Gastrocnemius medialis (tissue), 4 donors: ENCODE measurements at regions of chr5 and their contacts with region 1.

Region 1: DNA sequence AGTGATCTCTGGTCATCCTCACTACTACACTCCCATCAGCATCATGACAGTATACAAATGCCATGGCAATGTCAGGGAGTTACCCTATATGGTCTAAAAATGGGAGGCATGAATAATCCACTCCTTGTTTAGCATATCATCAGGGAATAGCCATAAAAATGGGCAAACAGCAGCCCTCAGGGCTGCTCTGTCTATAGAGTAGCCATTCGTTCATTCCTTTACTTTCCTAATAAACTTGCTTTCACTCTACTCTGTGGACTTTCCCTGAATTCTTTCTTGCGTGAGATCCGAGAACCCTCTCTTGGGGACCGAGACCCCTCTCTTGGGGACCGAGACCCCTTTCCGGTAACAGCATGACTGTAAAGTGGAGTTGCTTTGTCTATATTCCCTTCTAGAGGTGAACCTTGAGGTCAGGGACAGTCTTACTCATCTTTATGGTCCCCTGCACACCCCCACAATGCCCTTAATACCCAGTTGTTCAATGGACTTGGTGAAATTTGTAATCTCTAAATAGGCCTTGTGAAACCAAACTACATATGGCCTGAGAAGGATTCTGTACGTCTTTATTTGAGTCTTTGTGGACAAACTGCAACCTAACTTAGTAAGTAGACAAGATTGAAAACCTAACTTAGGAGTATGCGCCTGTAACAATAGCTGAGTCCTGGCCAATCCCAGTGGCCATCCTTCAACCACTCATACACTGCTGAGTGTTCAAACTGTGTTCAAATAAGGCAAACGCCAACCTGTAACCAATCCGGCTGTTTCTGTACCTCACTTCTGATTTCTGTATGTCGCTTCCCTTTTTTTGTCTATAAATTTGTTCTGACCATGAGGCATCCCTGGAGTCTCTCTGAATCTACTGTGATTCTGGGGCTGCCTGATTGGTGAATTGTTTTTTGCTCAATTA is 32.3 kb upstream of the UBTD2 start:
- DNase-seq: no peak
- ATAC-seq: no peak
- H3K4me3 ChIP-seq: no peak overlapping the region
- H3K27ac ChIP-seq: no peak overlapping the region
- H3K4me1 ChIP-seq: no peaks in the 10 kb centered on the region
- H3K27me3 ChIP-seq: no peaks in the 10 kb centered on the region
- CTCF ChIP-seq: no peak
- POLR2A ChIP-seq: no peak

Region 2: DNA sequence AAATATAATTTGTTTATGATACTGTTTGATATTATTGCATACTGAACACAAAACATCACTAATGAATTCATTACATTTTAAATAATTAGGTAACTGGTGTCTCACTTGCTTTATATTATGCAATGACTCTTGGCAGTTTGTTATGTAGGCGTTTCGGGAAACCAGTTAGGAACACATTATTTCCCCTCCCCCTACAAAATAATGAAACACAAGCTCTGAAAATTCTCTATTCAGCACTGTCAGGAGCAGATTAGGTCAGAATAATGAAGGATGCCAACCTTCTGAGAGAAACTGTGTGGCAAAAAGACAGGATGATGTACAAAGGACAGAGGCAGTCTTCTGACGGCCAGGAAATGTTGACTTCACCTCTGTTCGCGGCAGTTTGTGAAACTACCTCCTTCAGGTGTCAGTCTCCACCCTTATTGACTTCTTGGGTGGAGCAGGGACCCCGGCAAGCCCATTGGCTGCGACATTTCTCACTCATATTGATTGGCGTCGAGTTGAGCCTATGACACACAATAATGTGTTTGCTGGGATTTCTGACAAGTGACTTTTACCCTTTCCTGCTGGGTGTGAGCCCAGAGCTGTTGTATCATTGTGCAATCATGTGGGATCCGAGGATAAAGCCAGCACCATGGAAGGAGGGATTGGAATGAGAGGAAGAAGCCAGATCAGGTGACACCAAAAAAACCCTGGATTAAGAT is 104.6 kb after region 1 on chr5:
- in situ Hi-C with region 1: no loop called
- intact Hi-C with region 1: loop called (anchors 1 kb)
- DNase-seq: peak; percentile 57 to 85
- ATAC-seq: peak; percentile 81 to 84
- H3K4me3 ChIP-seq: peak overlapping the region in 1 of 4 donors; percentile 17
- H3K27ac ChIP-seq: peak overlapping the region; percentile 66 to 80 (median 75)
- H3K4me1 ChIP-seq: peaks cover 18 to 35% of the 10 kb centered on the region in 2 donors
- H3K27me3 ChIP-seq: no peaks in the 10 kb centered on the region
- CTCF ChIP-seq: no peak
- POLR2A ChIP-seq: peak in 1 of 2 donors; percentile 21